ENCODE measurements at regions of chr5 and their contacts with region 1.

Region 1: DNA sequence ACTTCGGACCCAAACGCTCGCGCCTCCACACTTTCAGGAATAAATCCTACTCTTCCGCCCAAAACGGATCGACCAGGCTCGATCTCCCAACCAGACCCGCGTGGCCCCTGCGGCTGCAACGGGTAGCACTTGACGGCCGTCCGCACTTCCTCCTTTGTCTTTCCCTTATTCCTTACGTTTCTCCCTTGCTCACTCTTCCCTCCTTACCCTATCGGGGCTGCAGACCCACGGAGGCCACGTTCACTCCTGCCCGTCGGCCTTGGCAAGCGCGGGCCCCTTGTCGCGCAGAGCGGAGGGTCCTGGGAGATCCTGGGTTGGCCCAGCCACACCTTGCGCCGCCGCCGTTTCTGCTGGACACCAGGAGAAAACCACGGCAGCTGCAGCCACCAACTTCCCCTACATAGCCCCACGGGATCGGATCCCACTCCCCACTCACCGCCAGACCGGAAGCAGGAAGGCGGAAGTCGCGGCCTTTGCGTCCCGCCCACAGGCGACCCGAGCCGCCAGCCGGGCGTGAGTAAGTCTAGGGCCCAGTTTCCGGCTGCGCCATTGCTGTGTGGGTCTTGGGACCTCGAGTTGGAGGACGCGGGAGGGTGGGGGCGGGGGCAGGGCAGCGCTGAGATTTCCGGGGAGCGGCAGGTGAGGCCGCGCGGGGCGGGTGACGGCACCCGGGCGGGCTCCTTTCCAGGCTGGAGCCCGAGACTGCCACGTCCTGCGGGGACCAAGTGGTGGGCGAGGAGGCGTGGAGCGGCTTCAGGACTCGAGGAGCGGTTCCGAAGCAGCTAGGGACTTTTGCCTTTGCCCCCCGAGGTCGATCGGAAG is at the start of gene SMIM15:
- DNase-seq: peak; percentile 88 to 95 (median 93)
- ATAC-seq: peak; percentile 96 to 99 (median 99)
- H3K4me3 ChIP-seq: peak within 1 kb of the TSS; percentile 79 to 96 (median 86)
- H3K27ac ChIP-seq: peak within 1 kb of the TSS; percentile 89 to 97 (median 94)
- H3K4me1 ChIP-seq: peaks cover 0 to 50% (median 9%) of the 10 kb centered on the region in 12 donors
- H3K27me3 ChIP-seq: no peaks in the 10 kb centered on the region
- CTCF ChIP-seq: no peak
- POLR2A ChIP-seq: peak in 1 of 2 donors; percentile 59
- total RNA-seq, gene SMIM15: 8.0 to 39.3 (median 22.2) TPM

Region 2: GRCh38 chr5:60944904-60945812 is 217.1 kb before region 1 on chr5 and contains the starts of genes ERCC8 and NDUFAF2:
- intact Hi-C with region 1: loop called in 1 of 10 experiments (anchors 5 kb)
- DNase-seq: peak; percentile 92 to 95 (median 93)
- ATAC-seq: peak; percentile 99 to 100 (median 100)
- H3K4me3 ChIP-seq: peak within 1 kb of the TSS; percentile 57 to 88 (median 69)
- H3K27ac ChIP-seq: peak within 1 kb of the TSS; percentile 11 to 84 (median 76)
- H3K4me1 ChIP-seq: peaks cover 0 to 28% (median 18%) of the 10 kb centered on the region in 12 donors
- H3K27me3 ChIP-seq: no peaks in the 10 kb centered on the region
- CTCF ChIP-seq: no peak
- POLR2A ChIP-seq: peak in 1 of 2 donors; percentile 61
- total RNA-seq, gene ERCC8: 5.0 to 10.1 (median 6.1) TPM
- total RNA-seq, gene NDUFAF2: 22.9 to 50.1 (median 34.4) TPM

Region 3: GRCh38 chr5:61200582-61201155 is 38.4 kb after region 1 on chr5:
- intact Hi-C with region 1: no loop called
- DNase-seq: no peak
- ATAC-seq: no peak
- H3K4me3 ChIP-seq: no peak overlapping the region
- H3K27ac ChIP-seq: no peak overlapping the region
- H3K4me1 ChIP-seq: no peaks in the 10 kb centered on the region
- H3K27me3 ChIP-seq: peaks cover 0 to 2% (median 0%) of the 10 kb centered on the region in 9 donors
- CTCF ChIP-seq: no peak
- POLR2A ChIP-seq: no peak

Region 4: GRCh38 chr5:61290791-61291210 is 128.6 kb after region 1 on chr5:
- intact Hi-C with region 1: no loop called
- DNase-seq: no peak
- ATAC-seq: no peak
- H3K4me3 ChIP-seq: no peak overlapping the region
- H3K27ac ChIP-seq: peak overlapping the region in 1 of 12 donors; percentile 52
- H3K4me1 ChIP-seq: peaks cover 0 to 4% (median 0%) of the 10 kb centered on the region in 12 donors
- H3K27me3 ChIP-seq: no peaks in the 10 kb centered on the region
- CTCF ChIP-seq: no peak
- POLR2A ChIP-seq: no peak

Region 5: GRCh38 chr5:61319388-61320146 is 157.3 kb after region 1 on chr5:
- intact Hi-C with region 1: loop called in 1 of 10 experiments (anchors 10 kb)
- DNase-seq: peak in 2 of 5 donors; percentile 21 to 29
- ATAC-seq: peak; percentile 48 to 83 (median 71)
- H3K4me3 ChIP-seq: peak overlapping the region in 3 of 12 donors; percentile 1 to 28 (median 10)
- H3K27ac ChIP-seq: peak overlapping the region in 6 of 12 donors; percentile 0 to 89 (median 40)
- H3K4me1 ChIP-seq: peaks cover 0 to 58% (median 4%) of the 10 kb centered on the region in 12 donors
- H3K27me3 ChIP-seq: no peaks in the 10 kb centered on the region
- CTCF ChIP-seq: no peak
- POLR2A ChIP-seq: no peak

Region 6: DNA sequence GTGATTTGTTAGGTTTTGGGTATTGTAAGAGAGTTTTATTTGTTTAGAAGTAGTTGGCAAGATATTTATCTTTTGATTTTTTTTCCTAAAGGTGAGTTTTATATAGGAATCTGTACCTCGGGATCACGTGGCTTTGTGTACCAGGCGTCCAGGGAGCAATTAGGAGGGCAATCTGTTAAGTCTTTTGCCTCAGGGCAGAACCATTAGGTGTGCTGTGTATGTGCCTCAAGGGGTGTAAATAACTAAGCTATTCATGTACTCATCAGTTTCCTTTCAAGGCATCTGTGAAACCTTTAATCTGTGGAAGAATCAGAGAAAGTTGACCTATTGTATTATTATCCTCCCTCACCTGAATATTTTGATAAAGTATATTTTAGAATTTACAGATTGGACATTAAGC is 209.3 kb after region 1 on chr5:
- intact Hi-C with region 1: no loop called
- DNase-seq: no peak
- ATAC-seq: no peak
- H3K4me3 ChIP-seq: no peak overlapping the region
- H3K27ac ChIP-seq: no peak overlapping the region
- H3K4me1 ChIP-seq: no peaks in the 10 kb centered on the region
- H3K27me3 ChIP-seq: no peaks in the 10 kb centered on the region
- CTCF ChIP-seq: no peak
- POLR2A ChIP-seq: no peak

Region 7: GRCh38 chr5:61408476-61409168 is 246.4 kb after region 1 on chr5:
- intact Hi-C with region 1: loop called in 1 of 10 experiments (anchors 2 kb)
- DNase-seq: peak; percentile 99 to 100 (median 100)
- ATAC-seq: peak; percentile 100
- H3K4me3 ChIP-seq: peak overlapping the region in 9 of 12 donors; percentile 6 to 50 (median 33)
- H3K27ac ChIP-seq: peak overlapping the region in 9 of 12 donors; percentile 4 to 74 (median 36)
- H3K4me1 ChIP-seq: peaks cover 3 to 38% (median 19%) of the 10 kb centered on the region in 12 donors
- H3K27me3 ChIP-seq: no peaks in the 10 kb centered on the region
- CTCF ChIP-seq: peak in 1 of 12 donors; percentile 9
- POLR2A ChIP-seq: peak in 1 of 2 donors; percentile 14

Measured in heart left ventricle (tissue), 16 donors.